PC-9 (cell line): ENCODE measurements at regions of chr1 and their contacts with region 1.

Region 1: DNA sequence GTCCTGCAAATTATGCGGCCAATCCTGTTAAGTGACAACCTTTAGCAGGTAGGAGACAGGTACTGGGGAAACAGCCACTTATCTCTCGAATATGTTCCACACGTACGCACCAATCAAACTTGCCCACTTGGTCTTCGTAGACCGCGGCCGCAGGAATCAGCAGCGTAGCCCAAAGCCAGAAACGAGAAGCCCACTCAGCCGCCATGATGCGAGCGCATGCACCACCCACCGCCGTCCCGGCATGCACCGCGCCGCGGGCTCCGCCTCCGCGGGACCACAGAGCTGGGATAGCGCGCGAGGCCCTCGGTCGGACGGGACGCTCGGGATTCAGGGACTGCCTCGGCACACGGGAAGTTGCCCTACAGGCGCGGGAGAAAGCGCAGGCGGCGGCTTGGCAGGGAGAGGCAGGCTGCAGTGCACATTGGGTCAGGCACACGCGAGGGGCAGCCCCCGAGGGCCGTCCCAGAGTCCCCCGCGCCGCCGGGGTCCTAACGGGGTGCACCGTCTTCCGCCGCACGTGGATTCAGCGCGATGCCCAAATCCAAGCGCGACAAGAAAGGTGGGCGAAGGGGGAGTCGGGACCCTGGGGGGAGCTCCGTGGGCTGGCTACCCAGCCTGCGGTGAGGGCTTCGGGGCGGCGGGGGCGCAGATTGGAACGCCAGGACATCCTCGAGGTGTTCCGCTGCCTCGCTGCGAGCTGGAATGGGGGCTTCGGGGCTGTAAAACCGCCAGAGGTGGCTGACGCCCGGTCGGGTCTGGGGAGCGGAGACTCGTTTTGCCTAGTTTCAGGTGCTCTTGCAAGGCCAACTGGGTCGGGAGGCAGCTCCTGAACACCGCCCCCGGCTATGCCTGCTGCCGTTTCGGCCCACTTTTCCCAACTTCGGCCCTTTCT is at the starts of genes EMC1 and MRTO4:
- DNase-seq: peak; percentile 60 to 85
- H3K4me3 ChIP-seq: peak within 1 kb of the TSS; percentile 82
- H3K27ac ChIP-seq: peak within 1 kb of the TSS; percentile 70
- H3K4me1 ChIP-seq: peaks cover 16% of the 10 kb centered on the region
- H3K27me3 ChIP-seq: no peaks in the 10 kb centered on the region
- CTCF ChIP-seq: no peak
- total RNA-seq, gene EMC1: 40.7 and 45.8 TPM in 2 replicates
- total RNA-seq, gene MRTO4: 29.0 and 32.4 TPM in 2 replicates

Region 2: DNA sequence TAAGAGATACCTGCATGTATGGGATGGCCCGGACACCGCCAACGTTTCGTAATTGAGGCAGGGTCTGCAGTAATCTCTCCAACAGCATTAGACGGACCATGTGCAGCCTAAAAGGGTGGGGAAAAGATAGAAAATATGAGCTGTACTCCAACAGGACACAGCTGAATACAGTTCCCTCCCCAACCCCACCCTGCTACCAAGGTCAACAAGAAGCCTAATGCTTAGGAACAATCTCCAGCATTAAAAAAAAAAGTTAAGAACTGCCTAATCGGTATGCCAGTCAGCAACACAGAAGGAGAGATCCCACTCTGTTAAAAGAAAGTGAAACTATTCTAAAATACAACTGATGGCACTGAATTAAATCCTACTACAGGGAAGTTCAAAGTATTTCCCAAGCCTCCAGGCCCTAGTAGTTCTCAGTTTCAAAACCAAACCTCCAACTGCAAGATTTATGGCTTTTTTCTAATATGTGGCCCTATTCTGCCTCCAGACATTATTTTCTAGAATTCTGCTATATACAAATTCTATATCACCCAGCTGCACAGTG is 122.5 kb before region 1 on chr1:
- CTCF ChIA-PET with region 1: no interaction called
- POLR2A ChIA-PET with region 1: no interaction called
- intact Hi-C with region 1: no loop called
- DNase-seq: no peak
- H3K4me3 ChIP-seq: no peak overlapping the region
- H3K27ac ChIP-seq: no peak overlapping the region
- H3K4me1 ChIP-seq: peaks cover 3% of the 10 kb centered on the region
- H3K27me3 ChIP-seq: no peaks in the 10 kb centered on the region
- CTCF ChIP-seq: no peak

Region 3: DNA sequence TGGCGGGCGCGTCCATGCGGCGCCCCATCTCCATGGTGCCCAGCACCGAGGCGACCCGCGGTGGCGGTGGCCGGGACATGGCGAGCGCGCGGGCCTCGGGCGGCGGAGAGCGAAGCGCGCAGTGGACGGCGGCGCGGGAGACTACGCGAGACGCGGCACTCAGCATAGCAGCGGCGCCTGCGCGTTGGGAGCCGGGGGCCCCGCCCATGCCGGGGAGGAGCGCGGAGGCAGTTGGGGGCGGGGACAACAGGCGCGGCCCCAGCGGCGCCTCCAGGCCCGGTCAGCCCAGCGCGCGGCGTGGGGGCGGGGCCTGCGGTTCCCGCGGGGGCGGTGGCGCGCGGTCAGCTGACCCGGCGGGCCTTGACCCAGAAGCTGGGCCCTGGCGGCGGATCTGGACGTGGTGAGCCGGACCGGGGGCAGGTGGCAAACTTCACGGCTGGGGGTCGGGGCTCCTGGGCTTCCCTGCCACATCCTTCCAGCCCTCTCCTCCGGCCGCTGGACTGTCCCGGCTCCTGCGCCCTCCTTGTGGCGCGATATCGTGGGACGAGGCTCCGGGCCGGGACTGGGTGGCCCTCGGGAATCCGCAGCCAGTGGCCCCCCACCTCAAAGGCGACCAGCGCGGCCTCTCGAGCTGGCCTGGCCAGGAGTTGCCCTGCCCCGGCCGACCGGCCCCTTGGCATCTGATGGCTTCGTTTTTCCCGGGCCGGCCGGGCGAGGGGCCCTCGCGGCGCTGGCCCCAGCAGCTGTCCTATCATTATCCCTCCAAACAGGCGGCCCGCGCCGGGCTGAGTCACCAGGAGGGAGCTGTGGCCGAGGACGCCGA is 60.6 kb after region 1 on chr1 and contains the starts of genes AKR7A2 and SLC66A1:
- CTCF ChIA-PET with region 1: interaction called, 3 read pairs
- POLR2A ChIA-PET with region 1: no interaction called
- intact Hi-C with region 1: loop called (anchors 5 kb)
- DNase-seq: peak; percentile 69 to 91
- H3K4me3 ChIP-seq: peak within 1 kb of the TSS; percentile 75
- H3K27ac ChIP-seq: no peak within 1 kb of the TSS
- H3K4me1 ChIP-seq: peaks cover 11% of the 10 kb centered on the region
- H3K27me3 ChIP-seq: no peaks in the 10 kb centered on the region
- CTCF ChIP-seq: no peak
- total RNA-seq, gene AKR7A2: 79.6 and 114 TPM in 2 replicates
- total RNA-seq, gene SLC66A1: 13.8 and 15.1 TPM in 2 replicates

Region 4: DNA sequence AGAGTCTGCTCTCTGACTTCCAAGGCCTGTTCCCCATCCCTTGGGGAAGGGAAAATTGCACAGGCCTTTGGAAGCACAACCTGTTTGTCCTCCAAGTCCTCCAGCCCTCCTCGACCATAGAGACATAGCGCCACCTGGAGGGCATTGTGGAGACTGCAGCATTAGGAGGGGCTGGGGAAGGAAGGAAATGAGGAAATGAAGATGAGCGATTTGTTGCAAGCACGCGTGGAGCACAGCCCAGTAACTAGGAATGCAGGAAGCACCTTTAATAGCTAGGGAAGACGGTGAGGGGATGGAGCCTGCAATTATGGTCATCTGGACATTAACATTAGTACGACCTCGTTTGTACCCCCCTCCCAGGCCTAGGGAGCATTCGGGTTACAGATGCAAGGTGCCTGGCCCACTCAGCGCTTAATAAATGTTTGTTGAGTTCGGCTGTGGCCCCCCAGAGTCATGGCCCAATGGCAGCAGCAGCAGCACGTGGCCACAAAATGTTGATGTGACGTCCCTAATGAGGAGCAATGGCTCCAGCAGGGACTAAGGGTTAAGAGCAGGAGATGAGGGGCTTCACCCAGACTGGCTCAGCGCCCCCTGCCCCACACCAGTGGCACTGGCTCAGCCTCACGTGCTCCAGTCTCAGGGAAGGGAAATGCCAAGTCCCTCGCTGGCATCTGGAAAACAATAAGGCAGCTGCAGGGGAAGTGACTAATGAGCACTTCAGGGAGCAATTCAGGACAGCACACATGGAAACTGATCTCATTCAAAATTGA is 1242.5 kb after region 1 on chr1:
- CTCF ChIA-PET with region 1: no interaction called
- POLR2A ChIA-PET with region 1: no interaction called
- intact Hi-C with region 1: no loop called
- DNase-seq: peak; percentile 80 to 91
- H3K4me3 ChIP-seq: no peak overlapping the region
- H3K27ac ChIP-seq: peak overlapping the region; percentile 97
- H3K4me1 ChIP-seq: peaks cover 39% of the 10 kb centered on the region
- H3K27me3 ChIP-seq: no peaks in the 10 kb centered on the region
- CTCF ChIP-seq: peak; percentile 93